HEK293T (cell line): ENCODE measurements at regions of chr17 and their contacts with region 1.

Region 1: DNA sequence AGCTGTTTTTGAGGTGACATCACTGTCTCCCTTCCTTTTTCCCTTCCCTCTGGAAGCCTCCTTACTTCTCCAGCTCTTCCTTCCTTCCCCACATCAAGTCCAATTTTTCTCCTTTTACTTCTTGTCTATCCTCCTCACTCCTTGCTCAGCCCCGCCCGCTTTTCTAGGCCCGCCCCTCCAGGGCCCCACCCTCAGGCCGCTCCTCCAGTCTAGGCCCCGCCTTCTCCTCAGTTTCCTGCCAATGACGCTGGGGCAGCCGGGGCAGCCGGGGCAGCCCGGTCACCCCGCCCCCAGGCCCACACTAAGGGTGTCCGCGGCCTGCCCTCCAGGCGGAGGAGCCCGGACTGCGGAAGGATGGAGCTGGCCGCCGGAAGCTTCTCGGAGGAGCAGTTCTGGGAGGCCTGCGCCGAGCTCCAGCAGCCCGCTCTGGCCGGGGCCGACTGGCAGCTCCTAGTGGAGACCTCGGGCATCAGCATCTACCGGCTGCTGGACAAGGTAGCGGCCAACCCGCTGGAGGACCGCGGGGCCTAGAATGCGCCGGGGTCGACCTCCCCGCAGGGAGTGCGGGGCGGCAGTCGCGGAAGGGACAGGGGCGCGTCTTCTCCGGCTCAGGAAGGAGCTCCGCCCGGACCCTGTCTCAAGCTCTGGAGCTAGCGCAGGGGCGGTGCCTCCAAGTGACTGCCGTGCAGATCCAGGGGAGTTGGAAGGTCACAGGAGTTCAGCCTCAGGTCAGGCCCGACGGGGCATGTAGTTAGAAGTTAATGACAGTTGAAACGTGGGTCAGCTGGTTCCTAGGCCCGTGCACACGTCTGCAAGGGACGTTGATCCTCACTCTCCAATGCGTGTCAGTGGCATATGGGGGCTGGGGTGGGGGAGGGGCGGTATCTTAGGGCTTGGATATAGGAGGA is at the start of gene PCTP:
- DNase-seq: peak; percentile 90

Region 2: GRCh38 chr17:55722742-55723487 is 28.1 kb before region 1 on chr17 and contains the start of gene TMEM100:
- CTCF ChIA-PET with region 1: no interaction called
- POLR2A ChIA-PET with region 1: interaction called, 11 read pairs
- DNase-seq: peak; percentile 19

Region 3: GRCh38 chr17:55731586-55732250 is 19.3 kb before region 1 on chr17:
- CTCF ChIA-PET with region 1: interaction called, 7 read pairs
- POLR2A ChIA-PET with region 1: interaction called, 17 read pairs
- DNase-seq: peak; percentile 32

Region 4: GRCh38 chr17:55806745-55807495 is 55.9 kb after region 1 on chr17:
- CTCF ChIA-PET with region 1: no interaction called
- POLR2A ChIA-PET with region 1: no interaction called
- DNase-seq: no peak